ENCODE measurements at regions of chr5 and their contacts with region 1.

Region 1: GRCh38 chr5:165457859-165458481 is 1952.6 kb downstream of the MAT2B start:
- DNase-seq: peak in 1 of 2 experiments; percentile 21
- H3K4me3 ChIP-seq: no peak overlapping the region
- H3K4me3 Mint-ChIP-seq: no peak overlapping the region
- H3K27ac Mint-ChIP-seq: no peak overlapping the region
- H3K4me1 ChIP-seq: no peaks in the 10 kb centered on the region
- H3K4me1 Mint-ChIP-seq: no peaks in the 10 kb centered on the region
- H3K27me3 ChIP-seq: no peaks in the 10 kb centered on the region
- H3K27me3 Mint-ChIP-seq: no peaks in the 10 kb centered on the region
- CTCF ChIP-seq: peak; percentile 44 to 72

Region 2: DNA sequence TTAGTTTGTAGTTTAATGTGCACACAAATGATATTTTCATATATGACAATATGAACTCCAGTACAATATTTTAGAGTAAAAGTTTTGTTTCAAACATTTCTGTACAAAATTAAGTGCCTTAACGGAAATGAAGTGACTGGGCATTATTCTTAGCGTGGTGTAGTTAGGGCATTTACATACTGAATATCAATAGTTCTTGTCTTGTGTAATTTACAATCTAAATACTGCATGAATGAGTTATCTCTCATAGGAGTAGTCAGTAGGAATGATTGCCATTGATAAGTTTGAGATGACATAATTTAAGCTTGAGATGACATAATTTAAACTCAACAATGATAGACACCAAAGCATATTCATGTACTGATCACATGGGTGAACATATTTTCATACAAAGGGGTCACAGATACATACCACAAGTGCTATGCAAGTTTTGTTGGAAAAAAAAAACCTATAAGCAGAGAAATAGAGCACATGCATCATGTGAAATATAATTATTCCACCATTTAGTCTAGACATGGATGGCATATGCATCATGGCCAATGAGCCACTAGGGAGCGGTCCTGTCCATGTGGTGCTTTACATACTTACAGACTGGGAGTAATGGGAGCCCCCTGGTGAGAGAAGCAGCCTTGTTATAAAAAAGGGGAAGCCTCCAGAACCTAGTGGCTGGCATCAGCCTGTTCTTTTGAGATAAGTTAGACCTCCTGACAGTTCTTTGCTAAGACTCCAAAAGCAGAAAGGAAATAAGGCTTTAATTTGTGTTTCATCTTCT is 428.7 kb before region 1 on chr5:
- CTCF ChIA-PET with region 1: no interaction called
- POLR2A ChIA-PET with region 1: no interaction called
- intact Hi-C with region 1: loop called (anchors 5 kb)
- DNase-seq: peak; percentile 38 to 56
- H3K4me3 ChIP-seq: no peak overlapping the region
- H3K4me3 Mint-ChIP-seq: no peak overlapping the region
- H3K27ac Mint-ChIP-seq: no peak overlapping the region
- H3K4me1 ChIP-seq: no peaks in the 10 kb centered on the region
- H3K4me1 Mint-ChIP-seq: no peaks in the 10 kb centered on the region
- H3K27me3 ChIP-seq: no peaks in the 10 kb centered on the region
- H3K27me3 Mint-ChIP-seq: no peaks in the 10 kb centered on the region
- CTCF ChIP-seq: peak; percentile 21 to 47

Region 3: DNA sequence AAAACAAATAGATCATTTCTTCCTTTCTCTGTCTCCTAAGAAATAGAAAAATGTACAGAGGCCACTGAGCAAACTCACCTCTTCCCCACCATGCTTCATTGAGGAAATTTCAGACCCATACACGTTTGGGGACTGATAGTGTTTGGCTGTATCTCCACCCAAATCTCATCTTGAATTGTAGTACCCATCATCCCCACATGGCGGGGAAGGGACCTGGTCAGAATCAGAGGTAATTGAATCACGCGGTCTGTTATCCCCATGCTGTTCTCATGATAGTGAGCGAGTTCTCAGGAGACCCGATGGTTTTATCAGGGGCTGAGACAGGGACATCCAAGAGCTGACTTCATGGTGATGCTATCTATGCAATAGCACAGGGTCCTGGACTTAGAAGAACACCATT is 296.8 kb before region 1 on chr5:
- CTCF ChIA-PET with region 1: no interaction called
- POLR2A ChIA-PET with region 1: no interaction called
- intact Hi-C with region 1: loop called (anchors 5 kb)
- DNase-seq: peak in 1 of 2 experiments; percentile 37
- H3K4me3 ChIP-seq: no peak overlapping the region
- H3K4me3 Mint-ChIP-seq: no peak overlapping the region
- H3K27ac Mint-ChIP-seq: no peak overlapping the region
- H3K4me1 ChIP-seq: no peaks in the 10 kb centered on the region
- H3K4me1 Mint-ChIP-seq: no peaks in the 10 kb centered on the region
- H3K27me3 ChIP-seq: no peaks in the 10 kb centered on the region
- H3K27me3 Mint-ChIP-seq: peaks cover 4% of the 10 kb centered on the region
- CTCF ChIP-seq: peak in 1 of 2 experiments; percentile 11

Region 4: DNA sequence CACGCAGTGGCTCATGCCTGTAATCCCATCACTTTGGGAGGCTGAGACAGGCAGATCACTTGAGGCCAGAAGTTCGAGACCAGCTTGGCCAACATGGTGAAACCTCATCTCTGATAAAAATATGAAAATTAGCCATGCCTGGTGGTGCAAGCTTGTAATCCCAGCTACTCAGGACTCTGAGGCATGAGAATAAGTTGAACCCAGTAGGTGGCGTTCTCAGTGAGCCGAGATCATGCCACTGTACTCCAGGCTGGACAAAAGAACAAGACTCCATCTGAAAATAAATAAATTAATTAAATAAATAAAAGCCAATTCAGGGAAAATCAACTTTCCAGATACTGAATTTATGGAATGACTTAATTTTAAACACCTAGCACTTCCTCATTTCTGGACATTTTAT is 230.5 kb before region 1 on chr5:
- CTCF ChIA-PET with region 1: interaction called, 7 read pairs
- POLR2A ChIA-PET with region 1: no interaction called
- intact Hi-C with region 1: loop called (anchors 5 kb)
- DNase-seq: peak in 1 of 2 experiments; percentile 12
- H3K4me3 ChIP-seq: no peak overlapping the region
- H3K4me3 Mint-ChIP-seq: no peak overlapping the region
- H3K27ac Mint-ChIP-seq: no peak overlapping the region
- H3K4me1 ChIP-seq: no peaks in the 10 kb centered on the region
- H3K4me1 Mint-ChIP-seq: no peaks in the 10 kb centered on the region
- H3K27me3 ChIP-seq: no peaks in the 10 kb centered on the region
- H3K27me3 Mint-ChIP-seq: no peaks in the 10 kb centered on the region
- CTCF ChIP-seq: no peak

Region 5: DNA sequence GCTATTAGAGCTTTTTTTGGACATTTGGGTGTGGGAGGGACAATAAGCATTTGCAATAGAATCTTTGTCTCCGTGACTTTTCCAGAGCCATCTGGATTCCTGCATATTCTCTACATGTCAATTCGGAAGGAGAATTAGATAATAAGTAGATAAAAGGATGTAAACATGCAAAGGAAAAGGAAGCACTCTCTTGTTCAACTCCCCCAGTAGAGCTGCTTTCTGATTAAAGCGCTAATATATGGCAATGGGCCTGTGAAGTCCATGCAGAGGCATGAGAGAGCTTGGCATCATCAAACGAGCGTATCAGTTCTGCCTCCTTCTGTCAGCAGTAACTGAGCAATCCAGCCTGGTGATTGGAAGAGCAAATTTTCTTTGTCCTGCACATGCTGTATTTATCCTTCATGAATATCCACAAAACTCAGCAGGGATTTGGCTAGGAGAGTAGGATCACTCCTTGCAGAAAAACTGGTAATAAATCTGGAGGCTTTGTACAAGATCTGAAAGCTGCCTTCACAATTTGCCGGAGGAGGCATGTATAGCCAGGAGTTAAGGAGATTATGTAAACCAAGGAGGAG is 199.7 kb before region 1 on chr5:
- CTCF ChIA-PET with region 1: no interaction called
- POLR2A ChIA-PET with region 1: no interaction called
- intact Hi-C with region 1: no loop called
- DNase-seq: no peak
- H3K4me3 ChIP-seq: no peak overlapping the region
- H3K4me3 Mint-ChIP-seq: no peak overlapping the region
- H3K27ac Mint-ChIP-seq: no peak overlapping the region
- H3K4me1 ChIP-seq: no peaks in the 10 kb centered on the region
- H3K4me1 Mint-ChIP-seq: no peaks in the 10 kb centered on the region
- H3K27me3 ChIP-seq: no peaks in the 10 kb centered on the region
- H3K27me3 Mint-ChIP-seq: no peaks in the 10 kb centered on the region
- CTCF ChIP-seq: no peak

Region 6: DNA sequence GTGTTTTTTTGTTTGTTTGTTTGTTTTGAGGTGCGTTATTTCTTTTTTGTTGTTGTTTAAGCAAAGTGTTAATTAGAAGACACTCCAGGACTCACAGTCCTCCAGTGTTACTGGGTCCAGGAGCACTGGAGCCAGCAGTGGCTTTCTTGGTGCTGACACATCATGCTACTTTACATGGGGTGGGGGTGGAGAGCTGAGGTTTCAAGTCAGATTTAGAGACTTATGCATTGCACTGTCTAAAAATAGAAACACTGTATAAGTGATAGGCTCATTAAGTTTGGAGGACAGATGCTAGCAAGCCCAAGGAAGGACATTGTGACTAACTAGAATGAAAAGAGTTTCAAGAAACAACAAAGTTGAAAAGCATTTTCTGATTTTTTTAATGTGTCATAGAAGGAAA is 256.6 kb after region 1 on chr5:
- CTCF ChIA-PET with region 1: no interaction called
- POLR2A ChIA-PET with region 1: no interaction called
- intact Hi-C with region 1: no loop called
- DNase-seq: no peak
- H3K4me3 ChIP-seq: no peak overlapping the region
- H3K4me3 Mint-ChIP-seq: no peak overlapping the region
- H3K27ac Mint-ChIP-seq: no peak overlapping the region
- H3K4me1 ChIP-seq: no peaks in the 10 kb centered on the region
- H3K4me1 Mint-ChIP-seq: no peaks in the 10 kb centered on the region
- H3K27me3 ChIP-seq: no peaks in the 10 kb centered on the region
- H3K27me3 Mint-ChIP-seq: no peaks in the 10 kb centered on the region
- CTCF ChIP-seq: no peak

Measured in Caco-2 (cell line).